ENCODE measurements at regions of chr3 and their contacts with region 1.

Region 1: GRCh38 chr3:182450942-182451787 is 342.1 kb upstream of the ATP11B start:
- DNase-seq: no peak
- H3K4me3 ChIP-seq: no peak overlapping the region
- H3K27ac ChIP-seq: no peak overlapping the region
- H3K4me1 ChIP-seq: no peaks in the 10 kb centered on the region
- H3K27me3 ChIP-seq: no peaks in the 10 kb centered on the region
- CTCF ChIP-seq: no peak

Region 2: DNA sequence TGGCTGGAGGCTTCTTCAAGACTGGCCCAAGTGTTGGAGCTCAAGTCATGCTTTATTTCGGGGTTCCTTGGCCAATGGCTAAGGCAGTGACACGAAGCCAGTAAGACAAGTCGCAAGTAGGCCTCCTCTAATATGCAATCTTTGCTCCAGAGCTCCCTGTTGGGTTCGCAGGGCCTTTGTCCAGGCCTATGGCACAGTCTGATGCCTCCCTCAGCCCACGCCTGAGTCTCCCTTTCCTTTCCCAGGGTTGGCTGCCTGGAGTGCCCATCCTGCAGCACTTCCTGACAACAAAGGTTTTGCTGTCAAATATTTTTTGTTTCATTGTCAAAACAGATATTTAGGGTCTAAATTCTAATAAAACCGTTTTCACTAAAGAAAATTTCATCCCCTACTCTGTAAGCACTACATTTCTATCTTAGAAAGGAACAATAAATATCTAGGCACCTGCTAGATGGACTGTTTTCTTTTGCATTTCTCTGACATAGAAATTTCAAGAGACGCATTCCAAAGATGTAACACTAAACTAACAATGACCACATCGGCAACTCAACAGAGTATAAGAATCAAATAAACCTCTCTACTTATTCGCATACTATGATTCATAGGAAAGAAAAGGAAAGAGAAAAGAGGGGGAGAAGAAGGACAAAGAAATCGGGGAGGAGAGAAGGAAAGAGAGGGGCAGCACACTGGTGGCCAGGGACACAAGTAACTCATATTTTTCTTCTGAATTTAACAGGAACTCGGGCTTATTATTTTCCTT is 51.0 kb before region 1 on chr3:
- CTCF ChIA-PET with region 1: no interaction called
- dilution Hi-C with region 1: loop called (anchors 5 kb)
- in situ Hi-C with region 1: no loop called
- intact Hi-C with region 1: no loop called
- DNase-seq: no peak
- H3K4me3 ChIP-seq: no peak overlapping the region
- H3K27ac ChIP-seq: no peak overlapping the region
- H3K4me1 ChIP-seq: no peaks in the 10 kb centered on the region
- H3K27me3 ChIP-seq: no peaks in the 10 kb centered on the region
- CTCF ChIP-seq: no peak